Ascending aorta (tissue), 2 donors: ENCODE measurements at regions of chr7 and their contacts with region 1.

Region 1: DNA sequence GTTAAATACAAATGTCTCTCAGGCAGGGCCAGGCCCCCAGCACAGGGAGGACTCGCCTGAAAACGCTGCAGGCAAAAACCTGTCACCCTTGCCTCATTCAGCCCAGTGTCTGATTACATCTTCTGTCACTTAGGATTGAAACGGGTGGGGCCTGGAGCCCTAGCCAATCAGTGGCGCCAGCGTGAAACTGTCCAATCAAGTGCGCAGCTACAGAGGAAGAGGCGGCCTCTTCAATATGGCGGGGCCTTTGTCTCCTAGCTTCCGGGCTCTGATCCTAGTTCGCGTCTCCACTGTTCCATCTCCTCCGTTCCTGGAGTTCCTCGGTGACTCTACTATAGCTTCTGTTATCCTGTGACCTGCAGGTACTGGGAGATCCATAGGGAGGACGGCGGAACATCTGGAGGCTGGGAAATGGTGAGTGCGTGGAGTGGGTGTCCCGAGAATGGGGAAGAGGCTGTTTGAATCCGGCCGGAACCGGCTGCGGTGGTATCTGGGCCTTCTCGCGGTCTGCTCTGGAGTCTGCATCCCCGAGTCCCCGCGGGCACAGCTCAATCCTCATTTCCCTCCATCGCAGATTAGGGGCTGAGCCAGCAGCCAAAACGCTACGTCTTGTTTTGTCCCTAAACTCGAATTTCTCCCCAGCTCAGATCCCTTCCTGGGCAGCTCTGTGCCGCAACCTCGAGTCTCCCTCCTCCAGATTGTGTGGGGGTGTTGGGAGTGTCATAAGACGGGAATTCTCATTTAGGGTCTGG is at the start of gene ZNF736:
- DNase-seq: peak; percentile 86 to 96
- H3K4me3 ChIP-seq: peak within 1 kb of the TSS; percentile 65 to 72
- H3K27ac ChIP-seq: peak within 1 kb of the TSS; percentile 38 to 63
- H3K4me1 ChIP-seq: peaks cover 0 to 9% of the 10 kb centered on the region in 2 donors
- H3K27me3 ChIP-seq: no peaks in the 10 kb centered on the region
- CTCF ChIP-seq: no peak
- total RNA-seq, gene ZNF736: 6.0 TPM

Region 2: DNA sequence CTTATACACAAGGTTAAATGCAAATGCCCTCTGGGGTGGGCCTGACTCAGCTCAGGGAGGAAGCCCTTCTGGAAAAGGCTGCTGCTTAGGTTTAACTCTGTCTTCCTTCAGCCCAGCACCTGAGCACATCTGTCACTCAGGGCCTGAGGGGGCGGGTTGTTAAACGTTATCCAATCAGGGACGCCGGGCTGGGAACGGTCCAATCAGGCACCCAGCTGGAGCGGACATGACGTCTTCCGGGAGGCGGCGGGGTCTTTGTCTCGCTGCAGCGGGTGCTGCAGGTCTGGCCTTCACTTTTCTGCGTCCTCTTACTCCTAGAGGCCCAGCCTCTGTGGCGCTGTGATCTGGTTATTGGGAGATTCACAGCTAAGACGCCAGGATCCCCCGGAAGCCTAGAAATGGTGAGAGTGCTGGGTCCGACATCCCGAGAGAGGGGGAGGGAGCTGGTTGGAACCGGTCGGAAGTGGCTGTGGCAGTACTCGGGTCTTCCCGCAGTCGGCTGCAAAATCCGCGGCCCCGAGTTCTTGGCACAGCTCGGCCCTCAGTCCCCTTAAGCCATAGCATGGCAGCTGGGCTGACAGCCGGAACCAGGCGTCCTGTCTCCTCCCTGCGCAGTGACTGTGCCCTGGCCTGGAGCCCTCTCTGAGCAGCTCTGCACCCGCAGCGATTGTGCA is 480.4 kb after region 1 on chr7 and contains the start of gene ZNF138:
- intact Hi-C with region 1: loop called (anchors 5 kb)
- DNase-seq: peak; percentile 88 to 98
- H3K4me3 ChIP-seq: peak within 1 kb of the TSS; percentile 78 to 97
- H3K27ac ChIP-seq: peak within 1 kb of the TSS; percentile 77 to 78
- H3K4me1 ChIP-seq: peaks cover 0 to 4% of the 10 kb centered on the region in 2 donors
- H3K27me3 ChIP-seq: no peaks in the 10 kb centered on the region
- CTCF ChIP-seq: no peak
- total RNA-seq, gene ZNF138: 2.0 TPM

Region 3: DNA sequence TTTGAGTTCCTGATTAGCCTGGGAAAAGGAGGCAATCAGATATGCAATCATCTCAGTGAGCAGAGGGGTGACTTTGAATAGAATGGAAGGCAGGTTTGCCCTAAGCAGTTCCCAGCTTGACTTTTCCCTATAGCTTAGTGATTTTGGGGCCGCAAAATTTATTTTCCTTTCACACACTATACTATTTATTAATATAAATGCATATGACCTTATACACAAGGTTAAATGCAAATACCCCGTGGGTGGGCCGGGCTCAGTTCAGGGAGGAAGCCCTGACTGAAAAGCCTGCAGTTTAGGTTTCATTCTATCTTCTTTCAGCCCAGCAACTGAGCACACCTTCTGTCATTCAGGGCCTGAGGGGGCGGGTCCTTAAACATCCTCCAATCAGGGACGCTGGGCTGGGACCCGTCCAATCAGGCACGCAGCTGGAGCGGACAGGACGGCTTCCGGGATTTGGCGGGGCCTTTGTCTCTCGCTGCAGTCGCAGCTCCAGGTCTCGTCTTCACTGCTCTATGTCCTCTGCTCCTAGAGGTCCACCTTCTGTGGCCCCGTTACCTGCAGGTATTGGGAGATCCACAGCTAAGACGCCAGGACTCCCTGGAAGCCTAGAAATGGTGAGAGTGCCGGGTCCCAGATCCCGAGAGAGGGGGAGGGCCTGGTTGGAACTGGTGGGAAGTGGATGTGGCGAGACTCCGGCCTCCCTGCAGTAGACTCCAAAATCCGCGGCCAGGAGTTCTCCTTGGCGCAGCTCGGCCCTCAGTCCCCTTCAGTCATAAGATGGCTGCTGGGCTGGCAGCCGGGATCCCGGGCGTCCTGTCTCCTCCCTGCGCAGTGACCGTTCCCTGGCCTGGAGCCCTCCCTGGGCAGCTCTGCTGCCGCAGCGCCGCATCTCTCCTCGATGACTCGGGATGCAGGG is 589.1 kb after region 1 on chr7 and contains the start of gene ZNF273:
- intact Hi-C with region 1: loop called (anchors 5 kb)
- DNase-seq: peak; percentile 83 to 96
- H3K4me3 ChIP-seq: peak within 1 kb of the TSS; percentile 82 to 88
- H3K27ac ChIP-seq: peak within 1 kb of the TSS; percentile 73 to 85
- H3K4me1 ChIP-seq: peaks cover 0 to 5% of the 10 kb centered on the region in 2 donors
- H3K27me3 ChIP-seq: no peaks in the 10 kb centered on the region
- CTCF ChIP-seq: no peak
- total RNA-seq, gene ZNF273: 1.7 TPM

Region 4: GRCh38 chr7:65037740-65038678 is 724.1 kb after region 1 on chr7:
- intact Hi-C with region 1: loop called (anchors 10 kb)
- DNase-seq: peak; percentile 74 to 96
- H3K4me3 ChIP-seq: peak overlapping the region; percentile 86 to 98
- H3K27ac ChIP-seq: peak overlapping the region; percentile 86 to 87
- H3K4me1 ChIP-seq: peaks cover 0 to 5% of the 10 kb centered on the region in 2 donors
- H3K27me3 ChIP-seq: no peaks in the 10 kb centered on the region
- CTCF ChIP-seq: peak in 1 of 3 experiments; percentile 7

Region 5: GRCh38 chr7:66099616-66100474 is 1785.9 kb after region 1 on chr7:
- intact Hi-C with region 1: loop called (anchors 5 kb)
- DNase-seq: peak; percentile 25 to 88
- H3K4me3 ChIP-seq: peak overlapping the region; percentile 47 to 60
- H3K27ac ChIP-seq: peak overlapping the region; percentile 84 to 93
- H3K4me1 ChIP-seq: no peaks in the 10 kb centered on the region
- H3K27me3 ChIP-seq: no peaks in the 10 kb centered on the region
- CTCF ChIP-seq: no peak